ENCODE measurements at regions of chr5 and their contacts with region 1.

Region 1: GRCh38 chr5:36728697-36729543 is 122.5 kb downstream of the SLC1A3 start:
- DNase-seq: peak; percentile 44
- ATAC-seq: no peak
- H3K4me3 Mint-ChIP-seq: no peak overlapping the region
- H3K27ac Mint-ChIP-seq: no peak overlapping the region
- H3K4me1 Mint-ChIP-seq: peaks cover 16% of the 10 kb centered on the region
- H3K27me3 Mint-ChIP-seq: peaks cover 2% of the 10 kb centered on the region

Region 2: GRCh38 chr5:36875790-36876388 is 147.0 kb after region 1 on chr5:
- CTCF ChIA-PET with region 1: interaction called, 4 read pairs
- POLR2A ChIA-PET with region 1: interaction called, 10 read pairs
- DNase-seq: peak; percentile 80
- ATAC-seq: peak; percentile 66
- H3K4me3 Mint-ChIP-seq: peak overlapping the region; percentile 87
- H3K27ac Mint-ChIP-seq: peak overlapping the region; percentile 95
- H3K4me1 Mint-ChIP-seq: peaks cover 34% of the 10 kb centered on the region
- H3K27me3 Mint-ChIP-seq: no peaks in the 10 kb centered on the region